GM18951 (cell line): ENCODE measurements at regions of chr6 and their contacts with region 1.

Region 1: GRCh38 chr6:41463062-41463930 is 82.9 kb upstream of the FOXP4 start:
- POLR2A ChIP-seq: no peak

Region 2: DNA sequence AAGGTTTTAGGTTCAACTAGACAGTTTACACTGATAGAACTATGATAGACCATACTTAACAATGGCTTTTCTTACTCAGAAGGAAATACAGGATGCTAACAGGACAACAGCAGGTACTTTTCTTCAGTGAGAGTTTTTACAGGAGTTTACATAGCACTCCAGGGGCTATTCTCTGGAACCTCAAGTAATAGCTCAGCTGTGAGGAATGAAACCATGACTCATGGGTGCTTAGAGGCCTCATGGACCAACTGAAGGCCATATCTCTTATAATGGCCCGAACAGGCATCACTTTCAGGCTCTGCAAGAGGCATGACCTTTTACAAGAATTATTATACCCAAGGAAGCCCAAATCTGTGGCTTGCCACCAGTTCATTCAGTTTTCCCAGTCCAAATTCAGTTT is 340.9 kb before region 1 on chr6:
- in situ Hi-C with region 1: no loop called
- POLR2A ChIP-seq: no peak

Region 3: DNA sequence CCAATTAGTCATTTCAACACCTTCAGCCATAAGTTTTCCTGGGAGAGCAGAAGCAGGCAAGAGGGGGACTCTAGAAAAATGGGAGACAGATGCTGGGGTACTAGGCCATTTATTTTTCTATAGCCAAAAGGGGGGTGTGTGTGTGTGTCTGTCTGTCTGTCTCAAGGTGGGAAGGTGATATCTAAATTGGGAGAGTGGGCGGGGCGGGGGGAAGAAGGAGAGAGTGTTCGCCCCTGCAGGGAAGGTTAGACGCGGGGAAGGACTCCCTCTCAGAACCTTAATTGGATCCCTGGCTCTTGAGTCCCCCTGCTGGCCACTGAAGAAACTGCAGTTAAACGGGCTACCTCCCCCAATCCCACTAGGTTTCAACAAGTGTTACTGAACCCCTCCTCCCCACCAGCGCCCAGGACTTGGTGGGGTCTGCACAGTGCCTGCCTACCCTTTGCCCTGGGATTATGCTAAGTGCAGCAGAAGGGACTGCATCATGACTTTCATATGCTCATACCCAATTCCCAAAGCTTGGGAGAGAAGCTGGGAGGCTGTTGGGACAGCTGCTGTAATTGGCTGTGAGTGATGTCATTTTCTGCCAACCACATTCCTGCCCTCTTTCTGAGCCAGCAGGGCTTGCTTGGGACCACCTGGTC is 128.7 kb after region 1 on chr6:
- in situ Hi-C with region 1: loop called (anchors 5 kb)
- POLR2A ChIP-seq: no peak